CD4-positive, alpha-beta T cell (primary cell): ENCODE measurements at regions of chr5 and their contacts with region 1.

Region 1: DNA sequence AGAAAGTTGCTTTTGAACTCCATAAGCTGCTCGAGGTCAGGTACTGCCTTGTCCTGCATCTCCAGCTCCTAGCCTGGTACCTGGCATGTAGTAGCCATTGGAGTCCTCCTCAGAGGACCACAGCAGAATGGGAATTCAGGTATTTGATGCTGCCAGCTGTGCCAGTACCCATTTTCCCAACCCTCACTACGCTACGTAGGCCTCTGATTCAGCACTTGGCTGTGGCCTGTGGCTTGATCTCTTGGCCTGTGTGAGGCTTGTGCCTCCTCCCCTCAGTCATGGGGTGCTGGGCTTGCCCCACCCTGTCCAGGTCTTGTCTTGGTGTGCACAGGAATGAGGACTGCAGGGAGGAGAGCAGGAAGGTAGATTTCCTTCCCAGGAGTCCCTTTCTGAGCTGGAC is 11.8 kb downstream of the OTULIN start:
- DNase-seq: peak in 5 of 14 experiments; percentile 26 to 58 (median 40)
- ATAC-seq: peak; percentile 48
- H3K4me3 ChIP-seq: peak overlapping the region; percentile 12
- H3K4me3 Mint-ChIP-seq: peak overlapping the region; percentile 60
- H3K27ac ChIP-seq: peak overlapping the region; percentile 48 to 57
- H3K27ac Mint-ChIP-seq: peak overlapping the region; percentile 85
- H3K4me1 ChIP-seq: peaks cover 31% of the 10 kb centered on the region
- H3K4me1 Mint-ChIP-seq: peaks cover 69% of the 10 kb centered on the region
- H3K27me3 ChIP-seq: no peaks in the 10 kb centered on the region
- H3K27me3 Mint-ChIP-seq: no peaks in the 10 kb centered on the region
- CTCF ChIP-seq: no peak

Region 2: GRCh38 chr5:14664302-14665100 is 11.8 kb before region 1 on chr5 and contains the start of gene OTULIN:
- CTCF ChIA-PET with region 1: interaction called, 8 read pairs
- POLR2A ChIA-PET with region 1: interaction called, 12 read pairs
- intact Hi-C with region 1: no loop called
- DNase-seq: peak; percentile 62 to 96 (median 80)
- ATAC-seq: peak; percentile 73
- H3K4me3 ChIP-seq: peak within 1 kb of the TSS; percentile 75
- H3K4me3 Mint-ChIP-seq: peak within 1 kb of the TSS; percentile 90
- H3K27ac ChIP-seq: peak within 1 kb of the TSS; percentile 77 to 82
- H3K27ac Mint-ChIP-seq: peak within 1 kb of the TSS; percentile 90
- H3K4me1 ChIP-seq: peaks cover 52% of the 10 kb centered on the region
- H3K4me1 Mint-ChIP-seq: peaks cover 77% of the 10 kb centered on the region
- H3K27me3 ChIP-seq: no peaks in the 10 kb centered on the region
- H3K27me3 Mint-ChIP-seq: no peaks in the 10 kb centered on the region
- CTCF ChIP-seq: no peak
- total RNA-seq, gene OTULIN: 69.4 to 77.0 TPM